Activated CD8-positive, alpha-beta T cell treated with anti-CD3 and anti-CD28 coated beads for 36 hours (primary cell): ENCODE measurements at regions of chr2 and their contacts with region 1.

Region 1: DNA sequence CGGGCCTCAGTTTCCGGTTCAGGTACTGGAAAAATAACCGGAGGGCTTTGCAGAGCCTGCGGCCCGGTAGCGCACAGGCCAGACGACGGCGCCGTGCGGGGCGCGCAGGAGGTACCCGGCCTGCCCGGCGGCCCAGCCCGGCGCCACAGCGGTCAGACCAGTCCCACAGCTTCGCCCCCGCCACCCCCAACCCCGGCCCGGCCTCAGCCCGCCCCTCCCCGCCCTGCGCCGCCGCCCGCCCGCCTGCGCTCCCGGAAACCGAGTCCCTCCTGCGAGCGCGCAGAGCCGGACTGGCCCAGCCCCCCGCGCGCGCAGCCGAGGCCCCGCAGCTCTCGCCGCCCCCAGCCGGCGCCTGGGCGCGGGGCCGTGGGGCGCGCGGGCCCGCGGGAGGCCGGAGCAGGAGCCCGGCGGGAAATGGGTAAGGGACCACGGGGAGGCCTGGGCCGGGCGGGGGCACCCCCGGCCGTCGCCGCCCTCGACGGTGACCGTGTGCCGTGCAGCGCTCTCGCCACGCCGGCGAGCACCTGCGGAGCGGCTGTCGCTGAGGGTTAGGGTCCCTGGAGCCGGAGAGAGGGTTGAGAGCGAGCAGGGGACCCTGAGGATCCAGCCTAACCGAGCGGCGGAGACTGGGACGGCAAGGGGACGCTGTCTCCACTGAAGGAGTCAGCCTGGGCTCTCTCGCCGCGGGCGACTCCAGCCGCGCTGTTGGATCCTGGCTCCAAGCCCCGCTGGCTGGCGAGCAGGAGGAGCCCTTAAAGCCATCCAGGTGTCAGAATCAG is 16.5 kb upstream of the PSD4 start:
- DNase-seq: peak; percentile 66
- ATAC-seq: peak; percentile 79
- H3K4me3 Mint-ChIP-seq: peak overlapping the region; percentile 84
- H3K27ac Mint-ChIP-seq: peak overlapping the region; percentile 86
- H3K4me1 Mint-ChIP-seq: peaks cover 21% of the 10 kb centered on the region
- H3K27me3 Mint-ChIP-seq: no peaks in the 10 kb centered on the region
- CTCF ChIP-seq: no peak

Region 2: DNA sequence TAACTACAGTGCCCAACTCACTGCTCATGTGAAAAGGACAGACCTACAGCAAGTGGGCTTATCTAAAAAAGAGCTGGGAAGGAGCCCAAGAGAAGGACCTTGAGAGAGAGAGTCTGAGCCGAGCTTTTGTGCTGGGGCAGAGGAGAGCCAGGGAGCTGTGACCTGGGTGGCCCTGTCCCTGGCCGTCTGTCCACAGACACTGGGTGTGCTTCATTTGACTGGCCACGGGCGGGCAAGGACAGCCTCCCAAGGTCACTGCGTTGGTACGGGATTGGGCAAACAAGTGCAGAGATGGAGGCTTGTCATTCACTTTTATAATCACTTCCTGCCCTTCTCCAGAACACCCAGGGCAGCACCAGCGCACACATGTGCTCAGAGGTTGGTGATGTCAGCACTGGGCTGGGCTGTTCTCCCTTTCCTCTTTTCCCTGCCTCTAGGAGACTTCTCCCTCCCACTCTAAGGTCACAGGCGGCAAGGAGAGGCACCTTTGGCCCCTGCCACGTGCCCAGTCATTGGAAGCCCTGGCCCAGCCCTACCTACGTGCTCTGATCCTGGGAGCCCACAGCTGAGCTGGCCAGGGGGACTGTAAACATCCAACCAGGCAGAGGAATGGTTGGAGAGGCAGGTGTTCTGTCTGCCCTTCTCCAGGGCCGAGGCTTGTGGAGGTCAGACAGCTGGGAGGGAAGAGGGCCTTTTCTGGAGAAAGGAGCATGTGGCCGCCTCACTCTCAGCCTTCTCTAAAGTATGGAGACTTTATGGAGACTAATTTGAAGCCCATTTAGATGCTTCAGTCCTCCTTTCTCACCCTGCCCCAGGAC is 10.0 kb after region 1 on chr2:
- CTCF ChIA-PET with region 1: interaction called, 31 read pairs
- POLR2A ChIA-PET with region 1: interaction called, 58 read pairs
- intact Hi-C with region 1: no loop called
- DNase-seq: peak; percentile 60
- ATAC-seq: peak; percentile 76
- H3K4me3 Mint-ChIP-seq: peak overlapping the region; percentile 51
- H3K27ac Mint-ChIP-seq: peak overlapping the region; percentile 96
- H3K4me1 Mint-ChIP-seq: peaks cover 70% of the 10 kb centered on the region
- H3K27me3 Mint-ChIP-seq: no peaks in the 10 kb centered on the region
- CTCF ChIP-seq: no peak

Region 3: DNA sequence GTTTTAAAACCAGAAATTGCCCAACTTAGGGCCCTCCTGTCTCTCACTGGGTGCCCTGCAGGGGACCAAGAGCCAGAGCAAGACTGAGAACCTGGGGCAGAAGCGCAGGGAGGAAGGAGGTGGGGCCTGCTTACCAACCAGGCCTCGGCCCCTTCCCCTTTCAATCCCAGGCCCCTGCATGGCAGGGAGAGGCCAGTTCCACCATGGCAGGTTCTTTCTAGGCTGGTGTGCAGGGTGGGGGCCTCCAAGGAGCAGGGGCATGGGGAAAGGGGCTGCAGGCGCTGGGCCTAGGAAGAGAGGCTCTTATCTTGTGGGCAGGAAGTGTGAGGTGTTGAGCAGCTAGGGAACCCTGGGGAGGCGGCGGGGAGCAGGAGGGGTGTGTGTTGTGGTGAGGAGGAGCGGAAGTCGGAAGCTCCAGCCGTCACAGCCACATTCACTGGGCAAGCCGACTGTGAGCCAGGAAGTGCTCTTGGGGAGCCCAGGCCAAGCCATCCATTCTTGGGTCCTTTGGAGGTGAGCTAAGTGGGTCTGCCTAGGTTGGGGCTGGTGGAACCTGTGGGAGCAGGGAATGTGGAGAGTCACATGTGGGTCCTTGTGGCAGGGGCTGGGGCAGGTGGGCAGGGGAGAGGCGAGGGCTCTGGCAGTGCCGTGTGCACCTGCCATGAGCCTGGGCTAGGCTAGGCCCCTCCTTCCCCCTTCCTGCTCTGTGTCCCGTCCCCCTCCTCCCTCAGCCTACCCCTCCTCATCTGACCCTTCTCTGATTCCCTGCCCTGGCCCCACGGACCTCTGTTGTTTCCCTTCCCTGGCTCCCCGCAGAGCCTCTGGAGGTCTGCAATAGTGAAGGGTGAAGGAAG is 16.5 kb after region 1 on chr2 and contains the start of gene PSD4:
- CTCF ChIA-PET with region 1: interaction called, 31 read pairs
- POLR2A ChIA-PET with region 1: interaction called, 58 read pairs
- intact Hi-C with region 1: no loop called
- DNase-seq: peak; percentile 95
- ATAC-seq: peak; percentile 77
- H3K4me3 Mint-ChIP-seq: peak within 1 kb of the TSS; percentile 84
- H3K27ac Mint-ChIP-seq: peak within 1 kb of the TSS; percentile 98
- H3K4me1 Mint-ChIP-seq: peaks cover 68% of the 10 kb centered on the region
- H3K27me3 Mint-ChIP-seq: no peaks in the 10 kb centered on the region
- CTCF ChIP-seq: no peak
- total RNA-seq, gene PSD4: 247 to 251 TPM

Region 4: DNA sequence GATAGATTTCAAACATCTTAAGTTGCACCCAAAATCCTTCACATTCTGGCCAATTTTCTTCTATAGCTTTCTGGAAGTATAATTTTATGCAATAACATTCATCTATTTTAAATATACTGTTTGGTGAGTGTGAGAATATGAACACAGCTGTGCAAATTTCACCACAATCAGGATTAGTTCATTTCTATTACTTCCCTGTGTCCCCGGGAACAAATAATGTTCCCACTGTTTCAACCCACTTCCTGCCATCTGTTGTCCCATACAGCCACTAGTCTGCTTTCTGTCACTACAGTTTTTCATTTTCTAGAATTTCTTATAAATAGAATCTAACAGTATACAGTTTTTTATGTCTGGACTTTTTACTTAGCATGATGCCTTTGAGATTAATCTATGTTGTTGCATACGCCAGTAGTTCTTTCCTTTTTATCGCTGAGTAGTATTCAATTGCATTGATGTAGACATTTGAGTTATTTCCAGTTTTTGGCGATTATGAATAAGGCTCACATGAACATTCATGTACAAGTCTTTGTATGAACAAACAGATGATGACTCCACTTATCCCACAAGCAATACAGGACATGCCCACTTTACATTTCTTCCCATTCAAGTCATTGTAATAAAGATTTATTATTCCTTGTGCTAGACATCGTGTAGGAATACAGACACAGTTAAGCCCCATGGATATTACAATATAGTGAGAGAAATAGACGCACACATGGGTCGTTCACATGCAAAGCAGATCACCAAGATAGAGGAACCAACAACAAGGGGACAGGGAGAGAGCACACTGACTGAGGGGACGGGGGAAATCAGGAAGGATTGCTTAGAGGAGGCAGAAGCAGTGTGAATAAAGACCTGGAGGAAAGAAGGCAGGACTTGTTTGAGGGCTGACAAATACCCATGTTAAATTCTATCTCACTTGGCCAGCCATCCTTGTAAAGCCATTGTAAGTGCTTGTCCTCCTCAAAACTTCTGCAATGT is 194.4 kb after region 1 on chr2:
- CTCF ChIA-PET with region 1: no interaction called
- POLR2A ChIA-PET with region 1: no interaction called
- intact Hi-C with region 1: no loop called
- DNase-seq: no peak
- ATAC-seq: no peak
- H3K4me3 Mint-ChIP-seq: no peak overlapping the region
- H3K27ac Mint-ChIP-seq: no peak overlapping the region
- H3K4me1 Mint-ChIP-seq: no peaks in the 10 kb centered on the region
- H3K27me3 Mint-ChIP-seq: peaks cover 2% of the 10 kb centered on the region
- CTCF ChIP-seq: no peak